ENCODE measurements at regions of chr5 and their contacts with region 1.

Region 1: DNA sequence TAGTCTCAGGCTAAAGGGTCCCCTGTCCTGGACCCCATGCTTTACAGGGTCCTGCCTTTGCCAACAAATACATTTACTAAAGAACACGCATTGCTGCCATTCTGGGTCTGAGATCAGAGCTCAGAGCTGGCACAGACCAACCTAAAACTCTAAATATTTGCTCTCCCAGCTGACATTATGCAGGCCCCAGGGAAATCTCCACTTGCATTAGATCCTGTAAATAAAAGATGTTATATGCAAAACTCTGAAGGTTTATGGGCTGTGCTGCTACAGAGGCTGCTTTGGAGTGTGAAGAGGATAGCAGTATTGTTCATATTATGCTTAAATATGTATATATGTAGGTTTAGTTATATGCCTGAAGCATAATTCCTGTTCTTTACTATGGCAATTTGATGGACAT is 35.9 kb upstream of the RANBP3L start:
- DNase-seq: no peak
- H3K4me3 ChIP-seq: no peak overlapping the region
- H3K27ac ChIP-seq: peak overlapping the region in 3 of 4 donors; percentile 54 to 61 (median 61)
- H3K4me1 ChIP-seq: peaks cover 0 to 50% (median 43%) of the 10 kb centered on the region in 4 donors
- H3K27me3 ChIP-seq: no peaks in the 10 kb centered on the region
- CTCF ChIP-seq: no peak
- EP300 ChIP-seq: no peak
- POLR2A ChIP-seq: no peak

Region 2: DNA sequence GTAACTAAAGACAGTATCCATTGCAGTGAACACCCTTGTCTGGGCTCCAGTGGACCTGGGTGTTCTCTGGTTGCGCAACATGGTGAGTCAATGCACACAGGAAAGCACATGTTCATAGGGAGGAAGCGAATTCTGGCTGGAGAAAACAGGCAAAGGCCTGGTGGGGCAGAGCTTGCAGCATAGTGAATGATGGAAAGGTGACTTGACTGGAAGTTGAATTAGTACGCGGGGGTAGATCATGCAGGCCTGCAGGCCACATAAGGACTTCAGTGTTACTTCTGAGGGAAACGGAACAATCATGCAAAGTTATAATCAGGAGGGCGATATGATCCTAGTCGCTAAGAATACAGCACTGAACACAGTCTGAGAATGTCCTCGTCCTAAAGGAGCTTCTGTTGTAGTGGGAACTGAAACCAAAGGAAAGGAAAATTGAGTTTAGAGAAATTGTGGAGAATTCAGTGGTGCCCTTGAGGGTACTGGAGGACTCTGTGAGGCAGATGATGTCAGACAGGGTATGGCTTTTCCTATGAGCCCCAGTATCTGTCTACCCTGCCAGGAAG is 36.0 kb after region 1 on chr5:
- intact Hi-C with region 1: loop called (anchors 5 kb)
- DNase-seq: peak; percentile 89
- H3K4me3 ChIP-seq: no peak overlapping the region
- H3K27ac ChIP-seq: peak overlapping the region in 3 of 4 donors; percentile 10 to 50 (median 42)
- H3K4me1 ChIP-seq: peaks cover 0 to 26% (median 17%) of the 10 kb centered on the region in 4 donors
- H3K27me3 ChIP-seq: no peaks in the 10 kb centered on the region
- CTCF ChIP-seq: no peak
- EP300 ChIP-seq: no peak
- POLR2A ChIP-seq: no peak

Region 3: GRCh38 chr5:36384845-36385244 is 47.2 kb after region 1 on chr5:
- intact Hi-C with region 1: no loop called
- DNase-seq: no peak
- H3K4me3 ChIP-seq: no peak overlapping the region
- H3K27ac ChIP-seq: no peak overlapping the region
- H3K4me1 ChIP-seq: peaks cover 0 to 3% (median 0%) of the 10 kb centered on the region in 4 donors
- H3K27me3 ChIP-seq: no peaks in the 10 kb centered on the region
- CTCF ChIP-seq: no peak
- EP300 ChIP-seq: no peak
- POLR2A ChIP-seq: no peak